ENCODE measurements at regions of chr9 and their contacts with region 1.

Region 1: GRCh38 chr9:73565833-73566465 is 414.3 kb downstream of the ANXA1 start:
- DNase-seq: no peak
- ATAC-seq: no peak
- H3K4me3 ChIP-seq: no peak overlapping the region
- H3K27ac ChIP-seq: no peak overlapping the region
- H3K4me1 ChIP-seq: no peaks in the 10 kb centered on the region
- H3K27me3 ChIP-seq: no peaks in the 10 kb centered on the region
- CTCF ChIP-seq: peak; percentile 71

Region 2: DNA sequence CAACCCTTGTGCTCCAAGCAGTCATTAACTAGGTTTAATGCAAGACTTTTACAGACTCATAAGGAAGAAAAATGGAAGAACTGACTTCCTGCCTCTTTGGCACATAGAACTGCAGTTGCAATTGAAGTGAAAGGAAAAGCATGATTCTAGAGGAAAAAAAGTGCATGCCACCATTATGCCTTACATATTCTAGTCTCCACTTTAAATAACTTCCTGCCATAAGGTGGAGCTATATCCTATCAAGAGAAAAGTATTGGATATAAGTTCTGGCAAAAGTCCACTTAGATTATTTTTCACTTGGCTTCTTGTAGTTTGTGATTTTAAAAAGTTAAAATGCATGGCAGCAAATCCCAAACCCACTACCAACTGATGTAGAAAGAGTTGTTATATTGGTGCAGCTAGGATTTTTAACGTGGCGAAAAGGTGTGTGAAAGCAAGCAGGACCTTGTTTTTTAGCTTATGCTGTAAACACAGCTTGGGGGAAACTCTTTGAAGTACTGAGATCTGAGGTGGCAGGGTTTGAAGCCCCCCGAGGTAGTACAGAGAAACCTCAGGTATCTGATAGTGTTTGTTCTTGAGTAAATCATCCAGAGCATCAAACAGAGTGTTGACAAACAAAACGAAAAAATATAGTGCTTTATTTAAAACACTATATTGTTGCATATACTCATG is 296.4 kb before region 1 on chr9:
- CTCF ChIA-PET with region 1: interaction called, 9 read pairs
- POLR2A ChIA-PET with region 1: no interaction called
- in situ Hi-C with region 1: no loop called
- intact Hi-C with region 1: loop called (anchors 2 kb)
- DNase-seq: no peak
- ATAC-seq: no peak
- H3K4me3 ChIP-seq: no peak overlapping the region
- H3K27ac ChIP-seq: no peak overlapping the region
- H3K4me1 ChIP-seq: no peaks in the 10 kb centered on the region
- H3K27me3 ChIP-seq: no peaks in the 10 kb centered on the region
- CTCF ChIP-seq: peak; percentile 32; the same call in 1 of the 2 replicates

Region 3: DNA sequence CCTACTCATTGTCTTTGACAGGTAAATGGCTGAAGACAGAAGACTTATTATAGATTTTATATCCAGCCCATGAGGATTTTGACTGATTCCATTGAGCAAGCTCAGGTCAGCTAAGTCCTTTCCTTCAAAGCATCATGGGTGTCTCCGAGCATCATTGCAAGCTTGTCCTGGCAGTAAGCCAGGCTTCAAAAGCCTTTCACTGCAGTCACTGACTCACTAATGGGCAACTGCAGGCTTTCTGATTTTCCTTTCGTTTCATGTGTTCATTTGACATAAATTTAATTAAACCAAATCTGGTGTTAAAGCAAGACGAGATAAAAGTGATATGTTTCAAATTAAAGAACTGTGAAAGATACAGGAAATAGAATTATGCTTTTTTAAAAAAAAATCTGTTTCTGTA is 11.9 kb after region 1 on chr9:
- CTCF ChIA-PET with region 1: no interaction called
- POLR2A ChIA-PET with region 1: no interaction called
- in situ Hi-C with region 1: no loop called
- intact Hi-C with region 1: no loop called
- DNase-seq: no peak
- ATAC-seq: no peak
- H3K4me3 ChIP-seq: no peak overlapping the region
- H3K27ac ChIP-seq: no peak overlapping the region
- H3K4me1 ChIP-seq: no peaks in the 10 kb centered on the region
- H3K27me3 ChIP-seq: no peaks in the 10 kb centered on the region
- CTCF ChIP-seq: no peak

Measured in Panc1 (cell line).